GM18951 (cell line): ENCODE measurements at regions of chrX and their contacts with region 1.

Region 1: DNA sequence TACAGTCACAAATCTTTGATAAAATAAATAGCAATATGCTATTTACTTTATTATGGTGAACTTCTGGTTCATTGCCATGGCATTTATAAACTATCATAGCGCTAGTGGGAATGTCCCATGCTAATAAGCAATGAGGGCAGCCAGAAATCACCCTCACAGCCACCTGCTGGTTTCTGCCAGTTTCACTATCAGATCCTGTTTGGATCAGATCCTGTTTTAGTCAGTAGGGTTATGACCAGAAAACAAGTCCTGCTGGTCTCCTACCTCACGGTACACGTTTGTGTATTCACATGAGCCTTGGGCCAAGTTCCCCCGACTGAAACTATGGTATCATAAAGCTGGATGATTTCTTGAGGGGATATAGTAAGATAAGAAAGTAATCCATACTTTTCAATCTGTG is 17.7 kb downstream of the FOXR2 start:
- POLR2A ChIP-seq: no peak

Region 2: GRCh38 chrX:55488593-55489313 is 152.1 kb before region 1 on chrX:
- in situ Hi-C with region 1: no loop called
- POLR2A ChIP-seq: peak; percentile 41

Region 3: DNA sequence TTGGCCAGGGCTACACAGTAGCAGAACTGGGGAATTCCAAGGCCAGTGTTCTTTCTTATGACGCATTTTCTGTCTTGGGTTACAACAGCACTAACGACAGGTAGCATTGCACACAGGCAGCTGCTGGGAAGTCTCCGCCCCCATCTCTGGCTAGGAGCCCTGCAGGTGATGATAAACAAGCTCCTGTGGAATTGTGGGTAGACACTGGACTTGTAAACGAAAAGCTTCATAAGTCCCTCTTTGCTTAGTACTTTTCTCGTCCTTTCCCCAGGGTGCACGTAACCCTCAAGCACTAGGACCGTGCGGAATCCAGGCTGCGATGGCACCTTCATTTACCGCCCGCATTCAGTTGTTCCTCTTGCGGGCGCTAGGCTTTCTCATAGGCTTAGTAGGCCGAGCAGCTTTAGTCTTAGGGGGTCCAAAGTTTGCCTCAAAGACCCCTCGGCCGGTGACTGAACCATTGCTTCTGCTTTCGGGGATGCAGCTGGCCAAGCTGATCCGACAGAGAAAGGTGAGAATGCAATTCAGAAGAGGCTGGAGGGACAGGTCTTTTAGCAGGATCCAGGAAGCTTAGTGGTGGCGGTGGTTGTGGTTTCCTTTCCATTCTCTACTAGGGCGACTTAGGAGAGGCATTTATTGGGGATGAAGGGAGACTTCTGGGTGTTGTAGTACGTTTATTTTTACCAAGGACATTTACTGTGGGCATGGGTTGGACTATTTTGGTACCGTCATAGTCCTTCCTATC is 1645.8 kb after region 1 on chrX and contains the start of gene FAAH2:
- in situ Hi-C with region 1: loop called (anchors 25 kb)
- POLR2A ChIP-seq: peak; percentile 12